Aorta (tissue), 5 donors: ENCODE measurements at regions of chr1 and their contacts with region 1.

Region 1: GRCh38 chr1:23867953-23868556 is at the start of gene FUCA1:
- DNase-seq: peak; percentile 95 to 96
- ATAC-seq: peak; percentile 98
- H3K4me3 ChIP-seq: peak within 1 kb of the TSS; percentile 24 to 61
- H3K27ac ChIP-seq: peak within 1 kb of the TSS in 1 of 2 donors; percentile 68
- H3K4me1 ChIP-seq: peaks cover 0 to 4% of the 10 kb centered on the region in 2 donors
- H3K27me3 ChIP-seq: no peaks in the 10 kb centered on the region
- total RNA-seq, gene FUCA1: 26.0 to 35.4 TPM

Region 2: GRCh38 chr1:23777979-23778814 is 89.9 kb before region 1 on chr1 and contains the start of gene PITHD1:
- intact Hi-C with region 1: loop called in 1 of 2 experiments (anchors 10 kb)
- DNase-seq: peak; percentile 83 to 91
- ATAC-seq: peak; percentile 89
- H3K4me3 ChIP-seq: peak within 1 kb of the TSS; percentile 88 to 93
- H3K27ac ChIP-seq: peak within 1 kb of the TSS in 1 of 2 donors; percentile 94
- H3K4me1 ChIP-seq: peaks cover 0 to 6% of the 10 kb centered on the region in 2 donors
- H3K27me3 ChIP-seq: no peaks in the 10 kb centered on the region
- total RNA-seq, gene PITHD1: 34.9 to 39.8 TPM

Region 3: DNA sequence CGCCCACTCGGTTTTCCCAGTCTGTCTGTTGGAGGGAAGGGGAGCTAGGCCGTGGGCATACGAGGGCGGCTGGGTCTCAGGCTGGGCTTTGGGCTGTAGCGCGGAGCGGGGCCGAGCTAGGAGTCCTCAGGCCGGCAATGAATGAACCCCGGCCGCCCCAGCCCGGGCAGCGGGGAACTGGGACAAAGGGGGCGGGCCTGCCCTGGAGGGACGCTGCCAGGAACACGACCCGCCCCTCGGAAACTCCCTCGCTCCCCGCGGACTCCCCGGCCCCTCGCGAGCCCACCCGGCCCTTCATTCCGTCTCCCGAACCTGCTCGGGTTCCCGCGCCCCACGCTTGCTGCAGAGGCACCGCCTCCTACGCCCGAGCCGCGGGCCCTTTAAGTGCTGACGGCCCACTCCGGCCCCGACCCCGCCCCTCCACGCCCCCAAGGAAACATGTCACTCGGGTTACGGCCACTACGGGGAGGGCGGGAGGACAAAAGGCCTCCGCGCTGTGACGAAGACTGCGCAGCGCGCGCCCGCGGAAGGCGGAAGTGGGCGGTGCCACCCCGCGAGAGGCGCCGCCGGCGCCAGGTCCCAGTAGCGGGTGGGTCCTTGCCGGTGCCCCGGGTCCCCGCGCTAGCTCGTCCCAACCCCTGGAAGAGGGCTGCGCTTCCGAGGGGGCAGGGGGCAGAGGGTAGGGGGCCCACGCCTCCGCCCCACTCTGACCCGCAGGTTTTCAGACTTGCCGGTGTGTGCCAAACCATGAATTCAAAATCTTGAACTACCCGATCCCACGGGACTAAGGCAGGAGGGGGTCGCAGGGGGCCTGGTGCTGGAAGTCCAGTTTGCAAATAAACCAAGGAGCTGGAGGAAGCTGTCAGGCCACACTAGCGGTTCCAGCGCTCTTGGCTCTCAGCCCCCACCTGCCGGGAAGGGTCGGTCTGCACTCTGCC is 67.4 kb before region 1 on chr1 and contains the start of gene GALE:
- intact Hi-C with region 1: loop called in 1 of 2 experiments (anchors 5 kb)
- DNase-seq: peak; percentile 99
- ATAC-seq: peak; percentile 97
- H3K4me3 ChIP-seq: peak within 1 kb of the TSS; percentile 65 to 66
- H3K27ac ChIP-seq: peak within 1 kb of the TSS; percentile 55 to 64
- H3K4me1 ChIP-seq: peaks cover 0 to 4% of the 10 kb centered on the region in 2 donors
- H3K27me3 ChIP-seq: no peaks in the 10 kb centered on the region
- total RNA-seq, gene GALE: 13.6 to 18.5 TPM

Region 4: GRCh38 chr1:24018611-24019580 is 150.8 kb after region 1 on chr1:
- intact Hi-C with region 1: loop called in 1 of 2 experiments (anchors 5 kb)
- DNase-seq: peak; percentile 95 to 98
- ATAC-seq: peak; percentile 93
- H3K4me3 ChIP-seq: no peak overlapping the region
- H3K27ac ChIP-seq: peak overlapping the region; percentile 51 to 98
- H3K4me1 ChIP-seq: peaks cover 2 to 6% of the 10 kb centered on the region in 2 donors
- H3K27me3 ChIP-seq: no peaks in the 10 kb centered on the region